ENCODE measurements at regions of chr7 and their contacts with region 1.

Region 1: GRCh38 chr7:151172273-151173141 is 5.0 kb upstream of the GBX1 start:
- DNase-seq: peak; percentile 97
- H3K4me3 ChIP-seq: peak overlapping the region in 1 of 2 experiments; percentile 48; a peak in 1 of 4 replicates
- H3K27ac ChIP-seq: no peak overlapping the region
- H3K4me1 ChIP-seq: peaks cover 0 to 4% of the 10 kb centered on the region in 2 experiments; a peak in 1 of 4 replicates
- H3K27me3 ChIP-seq: peaks cover 60% of the 10 kb centered on the region
- CTCF ChIP-seq: peak; percentile 100
- EP300 ChIP-seq: no peak
- RAD21 ChIP-seq: peak; percentile 97

Region 2: DNA sequence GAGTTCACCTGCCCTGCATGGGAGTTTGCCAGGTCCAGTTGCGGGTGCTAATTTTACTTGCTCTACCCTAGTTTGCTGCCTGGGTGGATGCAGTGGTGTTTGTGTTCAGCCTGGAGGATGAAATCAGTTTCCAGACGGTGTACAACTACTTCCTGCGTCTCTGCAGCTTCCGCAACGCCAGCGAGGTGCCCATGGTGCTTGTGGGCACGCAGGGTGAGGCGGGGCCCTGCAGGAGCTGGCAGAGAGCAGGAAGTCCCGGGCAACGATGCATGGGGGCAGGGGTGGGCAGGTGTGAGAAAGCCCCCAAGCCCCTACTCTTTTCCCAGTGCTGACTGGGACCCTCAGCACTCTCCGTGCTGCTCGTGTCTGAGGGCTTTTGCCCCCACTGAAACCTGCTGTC is 54.9 kb before region 1 on chr7:
- CTCF ChIA-PET with region 1: interaction called, 243 read pairs
- POLR2A ChIA-PET with region 1: no interaction called
- DNase-seq: no peak
- H3K4me3 ChIP-seq: no peak overlapping the region
- H3K27ac ChIP-seq: no peak overlapping the region
- H3K4me1 ChIP-seq: peaks cover 24 to 25% of the 10 kb centered on the region in 2 experiments
- H3K27me3 ChIP-seq: no peaks in the 10 kb centered on the region
- CTCF ChIP-seq: no peak
- EP300 ChIP-seq: no peak
- RAD21 ChIP-seq: no peak

Region 3: GRCh38 chr7:151143261-151144015 is 29.1 kb before region 1 on chr7:
- CTCF ChIA-PET with region 1: interaction called, 149 read pairs
- POLR2A ChIA-PET with region 1: no interaction called
- DNase-seq: no peak
- H3K4me3 ChIP-seq: no peak overlapping the region
- H3K27ac ChIP-seq: no peak overlapping the region
- H3K4me1 ChIP-seq: peaks cover 0 to 12% of the 10 kb centered on the region in 2 experiments; a peak in 1 of 4 replicates
- H3K27me3 ChIP-seq: no peaks in the 10 kb centered on the region
- CTCF ChIP-seq: no peak
- EP300 ChIP-seq: no peak
- RAD21 ChIP-seq: no peak

Region 4: GRCh38 chr7:151152643-151153513 is 19.6 kb before region 1 on chr7:
- CTCF ChIA-PET with region 1: interaction called, 149 read pairs
- POLR2A ChIA-PET with region 1: no interaction called
- DNase-seq: no peak
- H3K4me3 ChIP-seq: no peak overlapping the region
- H3K27ac ChIP-seq: no peak overlapping the region
- H3K4me1 ChIP-seq: no peaks in the 10 kb centered on the region
- H3K27me3 ChIP-seq: peaks cover 37% of the 10 kb centered on the region; the same call in 1 of the 2 replicates
- CTCF ChIP-seq: peak; percentile 31; the same call in 1 of the 2 replicates
- EP300 ChIP-seq: no peak
- RAD21 ChIP-seq: no peak

Region 5: DNA sequence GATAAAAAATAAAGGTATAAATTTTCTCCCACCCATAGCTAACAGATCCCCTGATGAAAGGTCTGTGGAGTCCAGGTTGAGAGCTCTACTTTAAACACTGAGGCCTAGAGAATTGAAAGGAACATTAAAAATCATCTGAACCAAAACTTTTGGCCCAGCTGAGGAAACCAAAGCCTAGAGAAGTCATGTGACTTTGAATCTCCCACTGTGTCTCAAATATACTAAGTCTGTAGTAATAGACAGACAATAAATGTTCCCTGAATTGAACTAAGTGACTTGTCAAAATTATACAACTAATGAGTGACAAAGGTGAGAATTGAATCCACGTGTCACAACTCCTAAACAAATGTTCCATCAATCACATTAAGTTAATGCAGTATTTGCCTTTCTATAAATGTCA is 10.8 kb before region 1 on chr7:
- CTCF ChIA-PET with region 1: interaction called, 86 read pairs
- POLR2A ChIA-PET with region 1: interaction called, 3 read pairs
- DNase-seq: no peak
- H3K4me3 ChIP-seq: no peak overlapping the region
- H3K27ac ChIP-seq: no peak overlapping the region
- H3K4me1 ChIP-seq: peaks cover 0 to under 1% of the 10 kb centered on the region in 2 experiments; a peak in 1 of 4 replicates
- H3K27me3 ChIP-seq: peaks cover 42% of the 10 kb centered on the region
- CTCF ChIP-seq: no peak
- EP300 ChIP-seq: no peak
- RAD21 ChIP-seq: no peak

Measured in SK-N-SH (cell line).